CD4-positive, alpha-beta T cell (primary cell): ENCODE measurements at regions of chr1 and their contacts with region 1.

Region 1: DNA sequence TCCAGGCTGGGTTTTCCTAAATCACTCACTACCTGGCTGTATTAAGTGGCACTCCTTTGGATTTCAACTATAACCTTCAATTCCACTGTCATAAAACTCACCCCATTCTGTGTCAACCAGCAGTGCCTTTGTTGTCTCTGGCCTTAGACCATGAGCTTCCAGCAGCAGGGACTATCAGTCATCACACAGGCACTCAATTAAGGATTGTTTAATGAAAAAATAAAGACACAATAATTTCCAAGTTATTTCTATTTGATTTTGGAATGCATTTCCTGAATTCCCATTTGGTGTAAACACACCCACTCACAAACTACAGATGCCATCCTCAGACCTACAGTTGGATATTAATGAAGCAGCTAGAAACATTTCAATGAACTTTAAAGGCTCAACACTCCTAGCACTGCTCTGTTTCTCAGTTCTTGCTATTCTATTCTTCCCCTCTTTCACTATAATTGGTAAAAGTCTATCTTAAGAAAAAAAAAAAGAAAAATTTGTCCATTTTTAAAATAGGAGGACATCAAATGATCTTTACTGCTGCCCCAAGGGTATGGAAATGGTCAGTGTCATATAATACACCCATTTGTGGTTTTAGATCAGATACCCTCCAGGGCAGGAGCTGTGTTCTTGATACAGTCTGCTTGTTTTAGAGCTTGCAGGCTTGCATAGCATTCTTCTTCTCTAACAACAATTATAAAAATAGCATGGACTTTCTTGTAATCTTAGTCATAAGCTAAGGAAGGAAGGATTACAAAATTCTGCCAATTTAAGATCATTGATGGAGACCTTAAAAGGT is 156.4 kb downstream of the PTGER3 start:
- DNase-seq: no peak
- ATAC-seq: no peak
- H3K4me3 ChIP-seq: no peak overlapping the region
- H3K4me3 Mint-ChIP-seq: no peak overlapping the region
- H3K27ac ChIP-seq: no peak overlapping the region
- H3K27ac Mint-ChIP-seq: no peak overlapping the region
- H3K4me1 ChIP-seq: no peaks in the 10 kb centered on the region
- H3K4me1 Mint-ChIP-seq: no peaks in the 10 kb centered on the region
- H3K27me3 ChIP-seq: peaks cover 0 to 3% of the 10 kb centered on the region in 2 experiments
- H3K27me3 Mint-ChIP-seq: no peaks in the 10 kb centered on the region
- CTCF ChIP-seq: no peak

Region 2: GRCh38 chr1:70871790-70872189 is 19.5 kb before region 1 on chr1:
- CTCF ChIA-PET with region 1: no interaction called
- POLR2A ChIA-PET with region 1: no interaction called
- intact Hi-C with region 1: loop called in 1 of 2 experiments (anchors 2 kb)
- DNase-seq: no peak
- ATAC-seq: no peak
- H3K4me3 ChIP-seq: no peak overlapping the region
- H3K4me3 Mint-ChIP-seq: no peak overlapping the region
- H3K27ac ChIP-seq: no peak overlapping the region
- H3K27ac Mint-ChIP-seq: no peak overlapping the region
- H3K4me1 ChIP-seq: no peaks in the 10 kb centered on the region
- H3K4me1 Mint-ChIP-seq: peaks cover 3% of the 10 kb centered on the region
- H3K27me3 ChIP-seq: no peaks in the 10 kb centered on the region
- H3K27me3 Mint-ChIP-seq: no peaks in the 10 kb centered on the region
- CTCF ChIP-seq: no peak